ENCODE measurements at regions of chr14 and their contacts with region 1.

Region 1: GRCh38 chr14:94036313-94037050 is 10.3 kb downstream of the OTUB2 start:
- DNase-seq: peak; percentile 88
- H3K4me3 Mint-ChIP-seq: no peak overlapping the region
- H3K27ac Mint-ChIP-seq: no peak overlapping the region
- H3K4me1 Mint-ChIP-seq: peaks cover 3% of the 10 kb centered on the region
- H3K27me3 Mint-ChIP-seq: no peaks in the 10 kb centered on the region

Region 2: DNA sequence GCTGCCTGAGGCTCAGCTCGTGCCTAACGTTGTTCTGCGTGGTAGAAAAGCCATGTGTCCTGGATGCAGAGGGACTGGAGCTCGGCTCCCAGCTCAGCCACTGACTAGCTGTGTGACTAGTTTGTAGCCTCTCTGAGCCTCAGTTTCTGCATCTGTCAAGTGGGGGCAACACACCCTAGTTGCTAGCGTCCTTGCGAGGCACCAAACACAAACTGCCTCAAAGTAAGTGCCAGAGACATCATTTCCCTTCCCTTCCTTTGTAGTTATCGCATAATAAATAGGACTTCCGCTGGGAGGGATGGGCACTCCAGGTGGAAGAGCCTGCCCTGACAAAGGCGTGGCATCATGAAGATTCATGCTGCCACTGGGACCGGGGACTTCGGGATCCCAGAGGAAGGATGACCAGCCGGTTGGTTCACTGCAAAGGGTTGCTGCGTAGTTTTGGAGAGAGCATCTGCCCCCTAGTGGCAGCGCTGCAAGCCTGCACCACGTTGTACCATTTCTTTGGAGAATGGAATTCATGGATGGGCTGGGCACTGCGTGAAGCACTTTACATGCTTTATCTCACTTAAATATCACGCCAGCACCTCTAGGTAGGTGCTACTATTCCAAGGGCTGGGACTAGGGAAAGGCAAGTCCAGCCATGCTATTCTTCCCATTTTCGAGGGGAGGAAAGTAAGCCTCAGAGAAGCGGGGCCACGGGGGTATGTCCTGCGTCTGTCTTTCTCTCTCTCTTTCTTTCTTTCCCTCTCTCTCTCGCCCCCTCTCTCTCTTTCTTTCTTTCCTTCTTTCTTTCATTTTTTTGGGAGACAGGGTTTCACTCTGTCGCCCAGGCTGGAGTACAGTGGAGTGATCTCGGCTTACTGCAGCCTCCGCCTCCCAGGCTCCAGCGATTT is 34.7 kb before region 1 on chr14:
- CTCF ChIA-PET with region 1: interaction called, 11 read pairs
- POLR2A ChIA-PET with region 1: no interaction called
- intact Hi-C with region 1: no loop called
- DNase-seq: peak; percentile 72
- H3K4me3 Mint-ChIP-seq: no peak overlapping the region
- H3K27ac Mint-ChIP-seq: peak overlapping the region; percentile 50
- H3K4me1 Mint-ChIP-seq: peaks cover 29% of the 10 kb centered on the region
- H3K27me3 Mint-ChIP-seq: no peaks in the 10 kb centered on the region

Region 3: DNA sequence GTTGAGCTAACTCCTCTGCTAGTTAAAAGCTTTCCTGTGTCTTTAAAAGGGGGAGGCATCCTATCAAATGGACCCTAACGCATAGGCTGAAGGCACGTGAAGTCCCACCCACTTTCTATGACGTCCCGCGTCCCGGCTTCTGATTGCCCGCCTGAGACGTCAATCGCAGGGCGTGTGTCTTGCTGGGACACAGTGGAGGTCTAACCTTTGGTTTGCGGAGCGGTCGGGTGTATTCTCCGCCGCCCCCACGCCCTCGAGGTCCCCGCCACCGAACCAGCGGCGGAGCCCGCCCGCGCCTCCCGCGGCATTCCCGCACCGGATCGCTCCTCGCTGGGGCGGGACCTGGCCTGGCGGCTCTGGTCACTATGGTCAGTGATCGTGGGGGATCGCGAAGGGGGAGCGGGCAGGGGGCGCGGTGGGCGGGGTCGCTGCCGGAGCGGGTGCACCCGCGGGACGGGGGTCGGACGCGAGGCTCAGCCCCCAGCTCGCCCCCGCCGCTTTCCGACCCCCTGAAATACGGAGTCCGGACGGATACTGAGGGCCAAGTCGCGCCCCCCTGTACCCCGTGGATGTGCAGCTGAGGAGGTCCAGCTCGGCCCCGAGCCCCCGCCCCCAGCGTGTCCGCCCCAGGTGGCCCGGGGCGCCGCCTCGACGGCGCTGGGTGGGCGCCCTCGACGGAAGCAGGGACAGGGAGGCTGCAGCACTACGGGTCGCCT is 10.2 kb before region 1 on chr14 and contains the start of gene OTUB2:
- CTCF ChIA-PET with region 1: interaction called, 43 read pairs
- POLR2A ChIA-PET with region 1: interaction called, 6 read pairs
- intact Hi-C with region 1: no loop called
- DNase-seq: peak; percentile 99
- H3K4me3 Mint-ChIP-seq: peak within 1 kb of the TSS; percentile 64
- H3K27ac Mint-ChIP-seq: no peak within 1 kb of the TSS
- H3K4me1 Mint-ChIP-seq: peaks cover 43% of the 10 kb centered on the region
- H3K27me3 Mint-ChIP-seq: no peaks in the 10 kb centered on the region
- total RNA-seq, gene OTUB2: 2.0 to 2.9 TPM

Region 4: DNA sequence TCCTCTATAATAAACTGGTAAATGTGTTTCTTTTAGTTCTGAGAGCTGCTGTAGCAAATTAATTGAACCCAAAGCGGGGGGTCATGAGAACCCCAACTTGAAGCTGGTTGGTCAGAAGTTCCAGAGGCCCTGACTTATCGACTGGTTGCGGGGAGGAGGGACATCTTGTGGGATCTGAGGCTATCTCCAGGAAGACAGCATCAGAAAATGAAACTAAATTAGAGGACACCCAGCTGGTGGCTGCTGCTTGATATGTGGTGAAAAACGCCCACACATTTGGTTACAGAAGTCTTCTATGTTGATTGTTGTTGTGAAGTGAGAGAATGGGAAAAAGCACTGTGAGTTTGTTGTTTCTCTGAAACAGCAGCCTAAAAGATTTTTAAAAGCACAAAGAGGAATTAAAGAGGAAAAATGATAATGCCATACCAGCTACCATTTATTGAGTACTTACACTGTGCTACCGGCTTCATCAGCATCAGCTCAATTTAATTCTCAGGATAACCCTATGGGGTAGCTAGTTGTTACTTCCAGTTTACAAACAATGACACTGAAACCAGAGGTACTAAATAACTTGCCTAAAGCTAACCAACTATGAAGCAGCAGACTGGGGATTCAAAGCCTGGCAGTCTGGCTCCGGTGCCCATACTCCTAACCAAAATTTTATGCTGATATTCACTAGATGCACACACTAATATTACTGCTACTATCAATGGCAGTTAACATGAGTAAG is 20.3 kb after region 1 on chr14:
- CTCF ChIA-PET with region 1: interaction called, 34 read pairs
- POLR2A ChIA-PET with region 1: no interaction called
- intact Hi-C with region 1: no loop called
- DNase-seq: peak; percentile 57
- H3K4me3 Mint-ChIP-seq: no peak overlapping the region
- H3K27ac Mint-ChIP-seq: peak overlapping the region; percentile 71
- H3K4me1 Mint-ChIP-seq: peaks cover 72% of the 10 kb centered on the region
- H3K27me3 Mint-ChIP-seq: no peaks in the 10 kb centered on the region

Region 5: DNA sequence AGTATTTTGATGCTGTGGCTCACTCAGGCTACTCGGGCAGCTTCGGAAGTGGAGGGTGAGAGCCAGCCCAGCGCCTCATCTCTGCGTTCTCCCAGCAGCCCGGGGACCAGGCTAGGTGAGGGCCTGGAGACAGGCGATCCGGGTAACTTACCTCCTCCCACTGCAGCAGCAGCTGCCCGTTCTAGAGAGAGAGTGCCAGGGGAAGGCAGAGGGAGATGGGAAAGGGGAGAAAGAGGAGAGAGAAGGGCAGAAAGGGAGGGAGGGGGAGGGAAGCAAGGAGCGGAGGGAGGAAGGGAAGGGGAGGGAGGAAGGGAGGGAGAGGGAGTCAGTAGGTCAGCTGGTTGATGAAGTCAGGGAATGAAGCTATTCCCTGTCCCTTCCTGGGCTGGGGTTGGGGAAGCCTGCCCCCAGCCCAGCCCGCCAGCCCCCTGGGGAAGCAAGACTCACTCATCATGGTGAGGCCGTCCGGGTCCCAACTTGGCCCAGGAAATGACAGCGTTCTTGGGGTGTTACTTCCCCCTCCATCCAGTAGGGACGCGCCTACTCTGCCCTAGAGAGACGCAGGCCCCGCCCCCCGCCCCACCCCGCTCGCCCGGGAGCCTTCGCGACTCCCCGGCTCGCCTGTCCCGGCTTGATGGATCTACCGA is 92.8 kb after region 1 on chr14 and contains the start of gene IFI27L2:
- CTCF ChIA-PET with region 1: interaction called, 187 read pairs
- POLR2A ChIA-PET with region 1: no interaction called
- intact Hi-C with region 1: loop called (anchors 1 kb)
- DNase-seq: peak; percentile 85
- H3K4me3 Mint-ChIP-seq: peak within 1 kb of the TSS; percentile 85
- H3K27ac Mint-ChIP-seq: peak within 1 kb of the TSS; percentile 76
- H3K4me1 Mint-ChIP-seq: peaks cover 12% of the 10 kb centered on the region
- H3K27me3 Mint-ChIP-seq: no peaks in the 10 kb centered on the region
- total RNA-seq, gene IFI27L2: 69.3 to 74.4 TPM

Region 6: GRCh38 chr14:94282991-94283723 is 246.7 kb after region 1 on chr14:
- CTCF ChIA-PET with region 1: no interaction called
- POLR2A ChIA-PET with region 1: no interaction called
- intact Hi-C with region 1: no loop called
- DNase-seq: no peak
- H3K4me3 Mint-ChIP-seq: no peak overlapping the region
- H3K27ac Mint-ChIP-seq: no peak overlapping the region
- H3K4me1 Mint-ChIP-seq: peaks cover 12% of the 10 kb centered on the region
- H3K27me3 Mint-ChIP-seq: peaks cover 1% of the 10 kb centered on the region

Region 7: GRCh38 chr14:94485944-94486841 is 449.7 kb after region 1 on chr14:
- CTCF ChIA-PET with region 1: interaction called, 11 read pairs
- POLR2A ChIA-PET with region 1: no interaction called
- intact Hi-C with region 1: loop called (anchors 5 kb)
- DNase-seq: peak; percentile 57
- H3K4me3 Mint-ChIP-seq: no peak overlapping the region
- H3K27ac Mint-ChIP-seq: no peak overlapping the region
- H3K4me1 Mint-ChIP-seq: peaks cover 15% of the 10 kb centered on the region
- H3K27me3 Mint-ChIP-seq: peaks cover 13% of the 10 kb centered on the region

Measured in activated CD4-positive, alpha-beta memory T cell treated with anti-CD3 and anti-CD28 coated beads for 36 hours (primary cell).